Adrenal gland (tissue), 19 donors: ENCODE measurements at regions of chr2 and their contacts with region 1.

Region 1: DNA sequence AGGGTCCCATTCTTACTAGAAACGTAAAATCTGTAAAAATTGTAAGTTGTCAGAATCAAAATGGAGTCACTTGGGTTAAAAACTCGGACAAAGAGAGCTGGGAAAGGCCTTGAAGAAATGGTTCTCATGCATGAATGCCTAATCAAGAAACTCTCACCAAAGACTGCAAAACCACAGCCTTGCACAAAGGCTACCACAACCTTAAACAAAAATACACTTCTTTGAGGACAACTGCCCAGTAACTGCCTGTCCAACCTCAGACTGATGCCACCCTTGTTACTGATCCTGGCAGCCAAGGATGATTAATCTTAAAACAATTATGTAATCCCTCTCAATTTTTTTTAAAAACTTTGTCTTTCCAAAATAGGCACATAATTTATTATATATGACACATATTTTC is 299.3 kb downstream of the CCDC85A start:
- DNase-seq: no peak
- H3K4me3 ChIP-seq: no peak overlapping the region
- H3K27ac ChIP-seq: no peak overlapping the region
- H3K4me1 ChIP-seq: no peaks in the 10 kb centered on the region
- H3K27me3 ChIP-seq: no peaks in the 10 kb centered on the region
- CTCF ChIP-seq: no peak
- POLR2A ChIP-seq: no peak

Region 2: DNA sequence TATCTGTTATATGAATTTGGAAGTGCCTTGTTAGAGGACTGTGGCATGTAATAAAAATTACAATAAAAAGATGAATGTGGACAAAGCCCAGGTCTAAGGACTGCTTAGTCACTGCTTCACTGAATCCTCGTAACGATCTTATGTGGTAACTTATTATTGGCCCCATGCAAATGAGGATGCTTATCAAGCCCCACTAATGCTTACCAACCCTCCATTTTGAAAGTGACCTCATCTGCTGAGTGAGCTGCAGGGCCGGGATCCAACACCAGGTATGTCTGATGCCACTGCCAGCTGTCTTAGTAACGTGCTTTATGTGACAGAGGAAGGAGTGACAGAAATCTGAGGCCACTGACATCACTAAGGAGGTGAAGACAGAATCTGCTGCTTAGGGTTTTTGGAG is 364.6 kb before region 1 on chr2:
- intact Hi-C with region 1: no loop called
- DNase-seq: no peak
- H3K4me3 ChIP-seq: no peak overlapping the region
- H3K27ac ChIP-seq: no peak overlapping the region
- H3K4me1 ChIP-seq: no peaks in the 10 kb centered on the region
- H3K27me3 ChIP-seq: no peaks in the 10 kb centered on the region
- CTCF ChIP-seq: no peak
- POLR2A ChIP-seq: no peak

Region 3: DNA sequence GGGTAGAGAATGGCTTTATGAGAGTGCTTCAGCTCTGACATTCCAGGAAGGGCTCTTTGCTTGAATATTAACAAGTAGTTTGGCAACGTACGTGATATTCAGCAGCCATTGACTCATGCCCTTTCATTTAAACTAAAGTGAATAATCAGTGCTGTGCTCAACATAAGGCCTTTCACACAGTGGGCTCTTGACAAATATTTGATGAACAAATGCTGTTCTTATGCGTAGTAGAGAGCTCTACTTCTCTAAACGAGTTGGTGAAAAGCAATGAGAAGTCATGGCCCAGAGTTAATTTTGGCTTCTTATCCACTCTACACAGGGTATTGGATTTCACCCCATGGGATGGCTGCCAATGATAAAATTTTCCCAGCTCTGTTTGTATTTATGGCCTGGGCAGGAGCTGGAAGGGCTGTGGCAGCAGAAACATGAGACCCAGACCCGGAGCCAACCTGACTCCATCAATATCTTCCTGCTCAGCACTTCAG is 39.6 kb after region 1 on chr2:
- intact Hi-C with region 1: loop called in 1 of 2 experiments (anchors 5 kb)
- DNase-seq: no peak
- H3K4me3 ChIP-seq: no peak overlapping the region
- H3K27ac ChIP-seq: no peak overlapping the region
- H3K4me1 ChIP-seq: no peaks in the 10 kb centered on the region
- H3K27me3 ChIP-seq: no peaks in the 10 kb centered on the region
- CTCF ChIP-seq: no peak
- POLR2A ChIP-seq: no peak

Region 4: DNA sequence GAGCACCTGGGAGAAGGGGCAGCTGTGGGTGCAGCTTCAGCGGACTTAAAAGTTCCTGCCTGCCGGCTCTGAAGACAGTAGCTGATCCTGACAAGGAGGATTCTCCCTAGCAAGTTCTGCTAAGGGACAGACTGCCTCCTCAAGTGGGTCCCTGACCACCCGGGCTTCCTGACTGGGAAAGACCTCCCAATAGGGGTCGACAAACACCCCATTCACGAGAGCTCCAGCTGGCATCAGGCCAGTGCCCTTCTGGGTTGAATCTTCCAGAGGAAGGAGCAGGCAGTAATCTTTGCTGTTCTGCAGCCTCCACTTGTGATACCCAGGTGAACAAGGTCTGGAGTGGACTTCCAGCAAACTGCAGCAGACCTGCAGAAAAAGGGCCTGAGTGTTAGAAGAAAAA is 333.6 kb after region 1 on chr2:
- intact Hi-C with region 1: no loop called
- DNase-seq: peak in 1 of 7 donors; percentile 20
- H3K4me3 ChIP-seq: no peak overlapping the region
- H3K27ac ChIP-seq: no peak overlapping the region
- H3K4me1 ChIP-seq: no peaks in the 10 kb centered on the region
- H3K27me3 ChIP-seq: no peaks in the 10 kb centered on the region
- CTCF ChIP-seq: no peak
- POLR2A ChIP-seq: no peak